ENCODE measurements at regions of chr12 and their contacts with region 1.

Region 1: DNA sequence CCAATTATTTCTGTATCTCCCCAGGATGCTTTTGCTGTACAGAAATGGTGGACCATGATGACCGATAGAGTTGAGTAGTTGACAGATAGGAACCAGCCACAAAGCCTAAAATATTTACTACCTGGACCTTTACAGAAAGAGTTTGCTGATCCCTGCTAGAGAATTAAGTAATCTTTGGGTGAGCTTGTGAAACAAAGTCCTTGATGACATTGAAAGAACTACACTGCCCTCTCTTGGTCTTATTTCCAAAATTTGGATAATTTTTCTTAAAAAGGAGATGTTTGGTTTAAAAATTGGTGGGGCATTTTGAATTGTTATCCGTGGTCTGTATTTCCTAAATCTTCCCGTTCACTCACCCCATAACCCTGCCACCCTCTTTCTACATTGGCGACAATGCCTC is 13.7 kb upstream of the TCTN1 start:
- DNase-seq: peak; percentile 55
- ATAC-seq: peak; percentile 49; the same call in 1 of the 2 replicates
- H3K4me3 ChIP-seq: no peak overlapping the region
- H3K27ac ChIP-seq: no peak overlapping the region
- H3K4me1 ChIP-seq: peaks cover 0 to 3% of the 10 kb centered on the region in 2 experiments; a peak in 1 of 4 replicates
- H3K27me3 ChIP-seq: no peaks in the 10 kb centered on the region
- CTCF ChIP-seq: peak in 2 of 3 experiments; percentile 52 to 94; a peak in 4 of 6 replicates
- POLR2A ChIP-seq: no peak
- RAD21 ChIP-seq: peak; percentile 94

Region 2: DNA sequence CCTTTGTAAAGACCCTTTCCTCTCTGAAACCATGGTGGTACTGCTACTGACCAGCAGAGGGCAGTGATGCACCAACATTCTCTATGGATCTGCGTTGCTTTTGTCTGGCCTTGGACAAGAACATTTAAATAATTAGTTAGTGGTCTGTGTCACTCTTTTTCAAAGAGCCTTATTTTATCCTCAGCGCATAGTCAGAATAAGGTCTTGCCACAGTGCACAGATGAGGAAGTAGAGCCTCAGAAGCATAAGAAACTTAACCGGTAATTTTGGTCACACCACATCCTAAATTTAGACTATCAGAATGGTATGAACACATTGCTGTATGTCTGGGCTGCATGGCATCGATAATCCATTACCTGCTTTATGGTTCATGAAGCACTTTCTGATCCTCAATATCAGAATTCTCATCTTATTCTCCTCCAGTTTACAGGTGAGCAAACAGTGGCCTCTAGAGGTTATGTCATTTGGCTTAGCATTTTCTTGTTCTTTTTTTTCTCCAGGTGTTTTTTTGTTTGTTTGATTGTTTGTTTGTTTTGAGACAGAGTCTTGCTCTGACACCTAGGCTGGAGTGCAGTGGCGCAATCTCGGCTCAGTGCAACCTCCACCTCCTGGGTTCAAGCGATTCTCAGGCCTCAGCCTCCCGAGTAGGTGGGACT is 499.8 kb before region 1 on chr12:
- CTCF ChIA-PET with region 1: interaction called, 6 read pairs
- POLR2A ChIA-PET with region 1: no interaction called
- RAD21 ChIA-PET with region 1: no interaction called
- intact Hi-C with region 1: loop called (anchors 2 kb)
- DNase-seq: peak; percentile 48
- ATAC-seq: peak; percentile 74
- H3K4me3 ChIP-seq: no peak overlapping the region
- H3K27ac ChIP-seq: no peak overlapping the region
- H3K4me1 ChIP-seq: peaks cover 0 to 5% of the 10 kb centered on the region in 2 experiments; a peak in 2 of 4 replicates
- H3K27me3 ChIP-seq: no peaks in the 10 kb centered on the region
- CTCF ChIP-seq: peak; percentile 89 to 96 (median 93)
- POLR2A ChIP-seq: no peak
- RAD21 ChIP-seq: peak; percentile 93

Region 3: GRCh38 chr12:110449799-110450497 is 150.3 kb before region 1 on chr12 and contains the start of gene ARPC3:
- CTCF ChIA-PET with region 1: interaction called, 55 read pairs
- POLR2A ChIA-PET with region 1: interaction called, 5 read pairs
- RAD21 ChIA-PET with region 1: interaction called, 4 to 5 read pairs
- intact Hi-C with region 1: loop called (anchors 1 kb)
- DNase-seq: peak; percentile 84
- ATAC-seq: peak; percentile 95
- H3K4me3 ChIP-seq: peak within 1 kb of the TSS; percentile 77 to 95
- H3K27ac ChIP-seq: peak within 1 kb of the TSS; percentile 78
- H3K4me1 ChIP-seq: peaks cover 0 to 13% of the 10 kb centered on the region in 2 experiments; a peak in 2 of 4 replicates
- H3K27me3 ChIP-seq: no peaks in the 10 kb centered on the region
- CTCF ChIP-seq: peak; percentile 81 to 87 (median 85)
- POLR2A ChIP-seq: peak; percentile 50
- RAD21 ChIP-seq: peak; percentile 97
- total RNA-seq, gene ARPC3: 115 TPM

Region 4: GRCh38 chr12:110513842-110514241 is 86.4 kb before region 1 on chr12:
- CTCF ChIA-PET with region 1: interaction called, 11 read pairs
- POLR2A ChIA-PET with region 1: no interaction called
- RAD21 ChIA-PET with region 1: interaction called, 3 read pairs
- intact Hi-C with region 1: loop called (anchors 2 kb)
- DNase-seq: no peak
- ATAC-seq: no peak
- H3K4me3 ChIP-seq: no peak overlapping the region
- H3K27ac ChIP-seq: no peak overlapping the region
- H3K4me1 ChIP-seq: peaks cover 0 to 7% of the 10 kb centered on the region in 2 experiments; a peak in 3 of 4 replicates
- H3K27me3 ChIP-seq: no peaks in the 10 kb centered on the region
- CTCF ChIP-seq: no peak
- POLR2A ChIP-seq: no peak
- RAD21 ChIP-seq: no peak

Region 5: DNA sequence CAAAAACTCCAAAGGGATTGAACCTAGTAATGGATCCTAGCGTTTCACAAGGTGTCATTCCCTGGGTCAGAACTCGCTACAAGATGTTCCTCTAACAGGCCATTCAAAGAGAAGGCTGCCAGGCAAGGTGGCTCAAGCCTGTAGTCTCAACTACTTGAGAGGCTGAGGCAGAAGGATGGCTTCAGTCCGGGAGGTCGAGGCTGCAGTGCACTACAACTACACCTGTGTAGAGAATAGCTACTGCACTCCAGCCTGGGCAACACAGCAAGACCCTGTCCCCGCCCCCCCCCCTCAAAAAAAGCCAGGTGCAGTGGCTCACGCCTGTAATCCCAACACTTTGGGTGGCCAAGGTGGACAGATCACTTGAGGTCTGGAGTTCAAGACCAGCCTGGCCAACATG is 31.5 kb before region 1 on chr12:
- CTCF ChIA-PET with region 1: no interaction called
- POLR2A ChIA-PET with region 1: no interaction called
- RAD21 ChIA-PET with region 1: no interaction called
- intact Hi-C with region 1: no loop called
- DNase-seq: no peak
- ATAC-seq: no peak
- H3K4me3 ChIP-seq: no peak overlapping the region
- H3K27ac ChIP-seq: no peak overlapping the region
- H3K4me1 ChIP-seq: peaks cover 2 to 36% of the 10 kb centered on the region in 2 experiments; a peak in 2 of 4 replicates
- H3K27me3 ChIP-seq: no peaks in the 10 kb centered on the region
- CTCF ChIP-seq: no peak
- POLR2A ChIP-seq: no peak
- RAD21 ChIP-seq: no peak

Region 6: GRCh38 chr12:110826592-110827200 is 226.4 kb after region 1 on chr12:
- CTCF ChIA-PET with region 1: no interaction called
- POLR2A ChIA-PET with region 1: no interaction called
- RAD21 ChIA-PET with region 1: no interaction called
- intact Hi-C with region 1: loop called (anchors 1 kb)
- DNase-seq: peak; percentile 85
- ATAC-seq: peak; percentile 99
- H3K4me3 ChIP-seq: no peak overlapping the region
- H3K27ac ChIP-seq: no peak overlapping the region
- H3K4me1 ChIP-seq: peaks cover 0 to 4% of the 10 kb centered on the region in 2 experiments; a peak in 2 of 4 replicates
- H3K27me3 ChIP-seq: no peaks in the 10 kb centered on the region
- CTCF ChIP-seq: peak; percentile 93 to 99 (median 97)
- POLR2A ChIP-seq: no peak
- RAD21 ChIP-seq: peak; percentile 97

Measured in HCT116 (cell line).